ENCODE measurements at regions of chr11 and their contacts with region 1.

Region 1: GRCh38 chr11:125451400-125452124 is 44.5 kb downstream of the FEZ1 start:
- DNase-seq: no peak
- ATAC-seq: no peak
- H3K4me3 Mint-ChIP-seq: no peak overlapping the region
- H3K27ac Mint-ChIP-seq: no peak overlapping the region
- H3K4me1 Mint-ChIP-seq: peaks cover 3% of the 10 kb centered on the region
- H3K27me3 Mint-ChIP-seq: no peaks in the 10 kb centered on the region

Region 2: GRCh38 chr11:125022551-125022950 is 429.0 kb before region 1 on chr11:
- CTCF ChIA-PET with region 1: no interaction called
- POLR2A ChIA-PET with region 1: no interaction called
- DNase-seq: no peak
- ATAC-seq: no peak
- H3K4me3 Mint-ChIP-seq: no peak overlapping the region
- H3K27ac Mint-ChIP-seq: no peak overlapping the region
- H3K4me1 Mint-ChIP-seq: no peaks in the 10 kb centered on the region
- H3K27me3 Mint-ChIP-seq: no peaks in the 10 kb centered on the region

Region 3: GRCh38 chr11:125429166-125429707 is 22.3 kb before region 1 on chr11:
- CTCF ChIA-PET with region 1: interaction called, 19 read pairs
- POLR2A ChIA-PET with region 1: no interaction called
- DNase-seq: peak; percentile 69
- ATAC-seq: peak; percentile 63
- H3K4me3 Mint-ChIP-seq: no peak overlapping the region
- H3K27ac Mint-ChIP-seq: no peak overlapping the region
- H3K4me1 Mint-ChIP-seq: peaks cover 3% of the 10 kb centered on the region
- H3K27me3 Mint-ChIP-seq: peaks cover 9% of the 10 kb centered on the region

Region 4: DNA sequence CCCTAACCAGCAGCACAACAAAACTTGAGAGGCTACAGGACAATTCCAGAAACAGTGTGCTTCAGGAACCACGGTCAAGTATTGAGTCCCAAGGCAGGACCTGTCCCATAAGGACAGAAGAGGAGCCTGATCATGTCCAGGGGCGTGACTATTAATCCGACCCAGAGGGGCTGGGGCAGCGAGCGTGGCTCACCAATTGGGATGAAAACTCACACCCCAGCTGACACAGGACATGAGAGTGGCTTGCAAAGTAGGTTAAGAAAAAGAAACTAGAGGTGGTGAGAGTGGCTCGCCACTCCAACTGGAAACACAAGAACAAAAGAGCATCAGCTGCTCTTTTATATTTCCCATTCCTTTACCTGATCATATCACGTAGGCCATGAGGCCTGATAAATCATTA is 60.5 kb after region 1 on chr11:
- CTCF ChIA-PET with region 1: no interaction called
- POLR2A ChIA-PET with region 1: no interaction called
- DNase-seq: no peak
- ATAC-seq: no peak
- H3K4me3 Mint-ChIP-seq: no peak overlapping the region
- H3K27ac Mint-ChIP-seq: no peak overlapping the region
- H3K4me1 Mint-ChIP-seq: peaks cover 57% of the 10 kb centered on the region
- H3K27me3 Mint-ChIP-seq: no peaks in the 10 kb centered on the region

Region 5: GRCh38 chr11:125603207-125603606 is 151.6 kb after region 1 on chr11:
- CTCF ChIA-PET with region 1: no interaction called
- POLR2A ChIA-PET with region 1: no interaction called
- DNase-seq: no peak
- ATAC-seq: no peak
- H3K4me3 Mint-ChIP-seq: no peak overlapping the region
- H3K27ac Mint-ChIP-seq: no peak overlapping the region
- H3K4me1 Mint-ChIP-seq: peaks cover 4% of the 10 kb centered on the region
- H3K27me3 Mint-ChIP-seq: no peaks in the 10 kb centered on the region

Region 6: GRCh38 chr11:125701858-125702621 is 250.5 kb after region 1 on chr11:
- CTCF ChIA-PET with region 1: no interaction called
- POLR2A ChIA-PET with region 1: no interaction called
- DNase-seq: no peak
- ATAC-seq: no peak
- H3K4me3 Mint-ChIP-seq: no peak overlapping the region
- H3K27ac Mint-ChIP-seq: no peak overlapping the region
- H3K4me1 Mint-ChIP-seq: no peaks in the 10 kb centered on the region
- H3K27me3 Mint-ChIP-seq: peaks cover 14% of the 10 kb centered on the region

Measured in activated CD8-positive, alpha-beta T cell treated with anti-CD3 and anti-CD28 coated beads, Interleukin-2, amount 10 ng/mL, durations not matched to agents 7 days and 5 days (primary cell).